ENCODE measurements at regions of chr9 and their contacts with region 1.

Region 1: GRCh38 chr9:124771021-124771866 is at the start of gene NR6A1:
- DNase-seq: peak; percentile 97
- ATAC-seq: peak; percentile 90
- H3K4me3 Mint-ChIP-seq: peak within 1 kb of the TSS; percentile 80
- H3K27ac Mint-ChIP-seq: peak within 1 kb of the TSS; percentile 74
- H3K4me1 Mint-ChIP-seq: peaks cover 29% of the 10 kb centered on the region
- H3K27me3 Mint-ChIP-seq: peaks cover 62% of the 10 kb centered on the region
- total RNA-seq, gene NR6A1: 0.82 to 1.1 TPM

Region 2: GRCh38 chr9:124658165-124659017 is 112.9 kb before region 1 on chr9:
- CTCF ChIA-PET with region 1: interaction called, 5 read pairs
- POLR2A ChIA-PET with region 1: no interaction called
- intact Hi-C with region 1: loop called in 1 of 2 experiments (anchors 1 kb)
- DNase-seq: peak; percentile 73
- ATAC-seq: peak; percentile 97
- H3K4me3 Mint-ChIP-seq: peak overlapping the region; percentile 95
- H3K27ac Mint-ChIP-seq: peak overlapping the region; percentile 97
- H3K4me1 Mint-ChIP-seq: peaks cover 15% of the 10 kb centered on the region
- H3K27me3 Mint-ChIP-seq: peaks cover 2% of the 10 kb centered on the region

Region 3: GRCh38 chr9:124861342-124862229 is 90.3 kb after region 1 on chr9 and contains the starts of genes ARPC5L and RPL35:
- CTCF ChIA-PET with region 1: interaction called, 260 read pairs
- POLR2A ChIA-PET with region 1: interaction called, 8 read pairs
- intact Hi-C with region 1: loop called in 1 of 2 experiments (anchors 1 kb)
- DNase-seq: peak; percentile 98
- ATAC-seq: peak; percentile 95
- H3K4me3 Mint-ChIP-seq: peak within 1 kb of the TSS; percentile 95
- H3K27ac Mint-ChIP-seq: peak within 1 kb of the TSS; percentile 95
- H3K4me1 Mint-ChIP-seq: peaks cover 46% of the 10 kb centered on the region
- H3K27me3 Mint-ChIP-seq: no peaks in the 10 kb centered on the region
- total RNA-seq, gene ARPC5L: 51.9 to 95.9 TPM
- total RNA-seq, gene RPL35: 2,227 to 2,561 TPM

Region 4: GRCh38 chr9:124894741-124895170 is 123.5 kb after region 1 on chr9:
- CTCF ChIA-PET with region 1: interaction called, 4 read pairs
- POLR2A ChIA-PET with region 1: no interaction called
- intact Hi-C with region 1: loop called in 1 of 2 experiments (anchors 1 kb)
- DNase-seq: peak; percentile 49
- ATAC-seq: peak; percentile 77
- H3K4me3 Mint-ChIP-seq: no peak overlapping the region
- H3K27ac Mint-ChIP-seq: no peak overlapping the region
- H3K4me1 Mint-ChIP-seq: peaks cover 10% of the 10 kb centered on the region
- H3K27me3 Mint-ChIP-seq: no peaks in the 10 kb centered on the region

Region 5: DNA sequence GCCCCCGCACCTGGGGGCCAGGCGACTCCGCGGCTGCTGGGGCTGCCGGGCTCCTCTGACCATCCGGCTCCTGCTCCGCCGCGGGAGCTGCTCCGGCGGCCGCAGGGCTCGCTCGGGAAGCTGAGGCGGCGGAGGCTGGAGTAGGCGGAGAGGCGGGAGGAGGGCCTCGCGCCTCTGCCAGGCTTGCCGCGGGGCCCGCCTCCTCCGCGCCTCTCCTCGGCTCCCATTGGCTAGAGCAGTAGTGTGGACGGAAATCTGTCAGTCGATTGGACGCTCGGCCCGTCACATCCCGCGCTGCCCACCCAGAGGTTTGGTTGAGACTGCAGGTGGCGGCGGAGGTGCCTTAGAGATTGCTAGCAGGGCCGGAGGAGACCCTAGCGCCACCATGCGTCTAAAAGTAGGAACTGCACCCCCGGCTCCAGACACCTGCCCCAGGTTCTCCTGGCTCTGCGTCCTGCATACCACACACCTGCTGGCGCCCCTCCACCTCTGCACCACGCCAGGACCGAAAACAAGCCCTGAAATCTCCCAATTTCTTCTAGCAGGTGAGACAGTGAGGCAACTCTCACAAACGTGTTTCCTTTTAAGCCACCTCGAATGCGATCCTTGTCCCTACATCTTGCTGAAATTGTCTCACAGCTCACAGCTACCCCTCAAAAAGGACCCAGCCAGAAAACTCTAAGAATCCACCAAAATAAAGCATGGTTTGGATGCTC is 372.3 kb after region 1 on chr9 and contains the start of gene SCAI:
- CTCF ChIA-PET with region 1: interaction called, 6 read pairs
- POLR2A ChIA-PET with region 1: no interaction called
- intact Hi-C with region 1: loop called (anchors 1 to 5 kb)
- DNase-seq: peak; percentile 99
- ATAC-seq: peak; percentile 100
- H3K4me3 Mint-ChIP-seq: peak within 1 kb of the TSS; percentile 83
- H3K27ac Mint-ChIP-seq: peak within 1 kb of the TSS; percentile 69
- H3K4me1 Mint-ChIP-seq: peaks cover 35% of the 10 kb centered on the region
- H3K27me3 Mint-ChIP-seq: no peaks in the 10 kb centered on the region
- total RNA-seq, gene SCAI: 13.0 to 13.8 TPM

Region 6: GRCh38 chr9:125200210-125201047 is 429.2 kb after region 1 on chr9 and contains the start of gene RABEPK:
- CTCF ChIA-PET with region 1: no interaction called
- POLR2A ChIA-PET with region 1: no interaction called
- intact Hi-C with region 1: loop called in 1 of 2 experiments (anchors 1 kb)
- DNase-seq: peak; percentile 95
- ATAC-seq: peak; percentile 98
- H3K4me3 Mint-ChIP-seq: peak within 1 kb of the TSS; percentile 83
- H3K27ac Mint-ChIP-seq: peak within 1 kb of the TSS; percentile 80
- H3K4me1 Mint-ChIP-seq: peaks cover 30% of the 10 kb centered on the region
- H3K27me3 Mint-ChIP-seq: no peaks in the 10 kb centered on the region
- total RNA-seq, gene RABEPK: 29.1 to 33.1 TPM

Region 7: DNA sequence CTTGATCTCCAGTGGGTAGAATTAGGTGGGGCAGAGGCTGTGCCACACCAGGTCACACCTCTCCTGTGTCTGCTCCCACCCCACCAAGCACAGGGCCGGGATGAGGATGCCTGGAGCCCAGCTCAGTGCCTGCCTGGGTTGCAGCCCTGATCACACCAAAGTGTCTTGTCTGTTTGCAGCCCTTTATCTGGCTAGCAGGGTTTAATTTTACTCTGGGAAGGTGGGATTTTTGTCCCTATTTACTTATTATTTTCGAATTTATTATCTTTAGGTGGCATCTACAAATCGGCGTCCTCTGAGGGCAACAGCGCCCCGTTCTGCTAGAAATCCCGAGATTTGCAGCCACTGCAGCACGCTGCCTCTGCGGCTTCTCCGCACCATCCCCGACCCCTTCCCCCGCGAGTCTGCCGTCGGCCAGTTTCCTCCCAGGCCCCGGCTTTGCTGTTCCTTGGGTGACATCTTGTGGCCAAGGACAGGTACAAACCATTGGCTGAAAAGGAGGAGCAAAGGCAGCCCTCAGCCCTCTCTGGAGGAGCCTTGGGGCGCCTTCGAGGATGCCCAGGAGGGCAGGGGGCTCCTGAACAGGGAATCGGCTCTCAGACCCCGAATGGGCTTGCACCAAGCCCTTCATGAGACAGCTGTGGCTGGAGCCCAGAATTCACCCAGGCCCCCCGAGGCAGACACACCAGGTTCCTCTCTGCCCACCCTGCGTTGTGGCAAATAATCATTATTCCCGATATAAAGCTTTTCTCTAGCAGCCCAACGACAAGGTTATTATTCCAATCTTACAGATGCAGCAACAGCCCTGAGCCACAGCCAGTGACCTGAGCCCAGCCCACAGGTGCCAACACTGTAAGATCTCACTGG is 603.4 kb after region 1 on chr9:
- CTCF ChIA-PET with region 1: no interaction called
- POLR2A ChIA-PET with region 1: no interaction called
- intact Hi-C with region 1: loop called (anchors 1 to 2 kb)
- DNase-seq: peak; percentile 85
- ATAC-seq: peak; percentile 97
- H3K4me3 Mint-ChIP-seq: peak overlapping the region; percentile 26
- H3K27ac Mint-ChIP-seq: no peak overlapping the region
- H3K4me1 Mint-ChIP-seq: peaks cover 2% of the 10 kb centered on the region
- H3K27me3 Mint-ChIP-seq: no peaks in the 10 kb centered on the region